WTC11 (cell line): ENCODE measurements at regions of chr22 and their contacts with region 1.

Region 1: DNA sequence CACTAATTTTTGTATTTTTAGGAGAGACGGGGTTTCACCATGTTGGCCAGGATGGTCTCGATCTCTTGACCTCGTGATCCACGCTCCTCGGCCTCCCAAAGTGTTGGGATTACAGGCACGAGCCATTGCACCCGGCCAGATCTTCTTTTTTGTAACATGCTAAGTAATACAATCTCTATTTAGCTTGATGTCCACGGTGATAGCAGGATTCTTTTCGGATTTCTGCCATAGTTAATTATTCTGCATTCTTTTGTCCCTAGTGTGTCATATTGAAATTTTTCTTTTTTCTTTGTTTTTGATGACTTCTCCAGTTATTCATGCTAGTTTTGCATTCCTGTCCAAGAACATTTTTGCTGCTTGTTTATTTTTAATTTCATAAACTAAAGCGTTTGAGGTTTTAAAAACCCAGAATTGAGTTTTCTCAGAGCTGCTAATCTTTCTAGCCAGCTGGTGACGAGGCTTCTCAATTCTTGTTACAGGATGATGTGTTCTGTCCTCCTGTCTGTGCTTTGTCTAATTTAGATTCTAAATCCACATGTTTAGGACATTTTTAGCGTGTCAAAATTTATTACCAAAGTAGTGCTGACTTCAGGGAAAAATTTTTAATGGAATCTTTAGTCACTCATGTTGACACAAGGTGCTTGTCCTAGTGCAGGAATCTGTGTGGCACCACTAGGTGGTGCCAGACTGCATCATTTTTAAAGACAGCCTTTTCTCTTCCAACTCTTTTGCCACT is 21.8 kb downstream of the NF2 start:
- DNase-seq: peak; percentile 34
- ATAC-seq: peak; percentile 53
- H3K4me3 Mint-ChIP-seq: no peak overlapping the region
- H3K27ac Mint-ChIP-seq: peak overlapping the region; percentile 85
- H3K4me1 Mint-ChIP-seq: peaks cover 52% of the 10 kb centered on the region
- H3K27me3 Mint-ChIP-seq: no peaks in the 10 kb centered on the region
- CTCF ChIP-seq: peak; percentile 67

Region 2: DNA sequence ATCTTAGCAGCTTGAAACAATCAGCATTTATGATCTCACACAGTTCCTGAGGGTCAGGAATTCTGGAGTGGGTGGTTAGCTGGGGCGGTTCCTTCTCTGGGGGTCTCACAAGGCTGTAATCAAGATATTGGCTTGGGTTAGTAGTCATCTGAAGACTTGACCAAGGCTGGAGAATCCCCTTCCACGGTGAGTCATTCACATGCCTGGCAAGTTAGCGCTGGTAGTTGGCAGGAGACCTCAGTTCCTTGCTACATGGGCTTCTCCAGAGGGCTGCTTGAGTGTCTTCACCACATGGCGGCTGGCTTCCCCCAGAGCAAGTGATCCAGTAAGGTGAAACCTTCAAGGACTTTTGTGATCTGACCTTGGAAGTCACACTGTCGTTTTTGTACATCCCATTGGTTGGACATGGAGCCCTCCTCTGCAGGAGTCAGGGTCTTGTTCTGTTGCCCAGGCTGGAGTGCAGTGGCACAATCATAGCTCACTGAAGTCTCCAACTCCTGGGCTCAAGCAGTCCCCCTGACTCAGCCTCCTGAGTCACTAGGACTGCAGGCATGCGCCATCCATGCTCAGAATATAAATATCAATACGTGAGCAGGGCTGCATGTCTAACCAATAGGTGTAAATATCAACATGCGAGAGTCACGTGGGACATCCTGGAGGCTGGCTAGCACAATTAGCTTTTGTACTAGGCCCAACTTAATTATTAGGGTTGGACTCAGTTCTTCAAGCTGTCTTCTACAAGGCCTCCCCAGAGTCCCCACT is 37.1 kb before region 1 on chr22:
- CTCF ChIA-PET with region 1: interaction called, 10 read pairs
- POLR2A ChIA-PET with region 1: no interaction called
- DNase-seq: no peak
- ATAC-seq: no peak
- H3K4me3 Mint-ChIP-seq: no peak overlapping the region
- H3K27ac Mint-ChIP-seq: no peak overlapping the region
- H3K4me1 Mint-ChIP-seq: no peaks in the 10 kb centered on the region
- H3K27me3 Mint-ChIP-seq: no peaks in the 10 kb centered on the region
- CTCF ChIP-seq: no peak

Region 3: DNA sequence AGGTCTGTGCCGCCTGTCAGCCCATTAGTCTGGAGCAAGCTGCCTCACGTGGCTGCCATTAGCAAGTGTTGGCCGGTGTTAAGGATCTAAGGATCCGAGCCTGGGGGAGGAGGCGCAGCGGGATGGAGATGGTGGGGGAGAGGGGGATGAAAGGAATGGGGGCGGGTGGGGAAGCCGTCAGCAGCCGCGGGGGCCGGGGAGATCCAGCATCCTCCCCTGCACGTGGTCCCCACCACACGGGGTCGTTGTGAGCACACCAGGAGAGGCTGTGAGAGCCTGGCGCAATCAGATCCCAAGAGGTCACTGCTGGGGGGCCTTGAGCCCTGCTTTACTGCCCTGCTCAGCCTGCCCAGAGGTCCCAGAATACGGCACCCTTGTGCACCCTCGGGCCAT is 101.9 kb after region 1 on chr22:
- CTCF ChIA-PET with region 1: interaction called, 11 read pairs
- POLR2A ChIA-PET with region 1: no interaction called
- DNase-seq: peak; percentile 76
- ATAC-seq: peak; percentile 76
- H3K4me3 Mint-ChIP-seq: no peak overlapping the region
- H3K27ac Mint-ChIP-seq: no peak overlapping the region
- H3K4me1 Mint-ChIP-seq: no peaks in the 10 kb centered on the region
- H3K27me3 Mint-ChIP-seq: peaks cover 9% of the 10 kb centered on the region
- CTCF ChIP-seq: no peak